Ovary (tissue), 10 donors: ENCODE measurements at regions of chr1 and their contacts with region 1.

Region 1: GRCh38 chr1:153510984-153511410 is 24.8 kb downstream of the S100A6 start:
- DNase-seq: peak; percentile 84 to 90 (median 86)
- H3K4me3 ChIP-seq: no peak overlapping the region
- H3K27ac ChIP-seq: no peak overlapping the region
- H3K4me1 ChIP-seq: peaks cover 19% of the 10 kb centered on the region
- H3K27me3 ChIP-seq: no peaks in the 10 kb centered on the region
- CTCF ChIP-seq: peak; percentile 84 to 91 (median 86)
- EP300 ChIP-seq: no peak
- POLR2A ChIP-seq: peak; percentile 3

Region 2: DNA sequence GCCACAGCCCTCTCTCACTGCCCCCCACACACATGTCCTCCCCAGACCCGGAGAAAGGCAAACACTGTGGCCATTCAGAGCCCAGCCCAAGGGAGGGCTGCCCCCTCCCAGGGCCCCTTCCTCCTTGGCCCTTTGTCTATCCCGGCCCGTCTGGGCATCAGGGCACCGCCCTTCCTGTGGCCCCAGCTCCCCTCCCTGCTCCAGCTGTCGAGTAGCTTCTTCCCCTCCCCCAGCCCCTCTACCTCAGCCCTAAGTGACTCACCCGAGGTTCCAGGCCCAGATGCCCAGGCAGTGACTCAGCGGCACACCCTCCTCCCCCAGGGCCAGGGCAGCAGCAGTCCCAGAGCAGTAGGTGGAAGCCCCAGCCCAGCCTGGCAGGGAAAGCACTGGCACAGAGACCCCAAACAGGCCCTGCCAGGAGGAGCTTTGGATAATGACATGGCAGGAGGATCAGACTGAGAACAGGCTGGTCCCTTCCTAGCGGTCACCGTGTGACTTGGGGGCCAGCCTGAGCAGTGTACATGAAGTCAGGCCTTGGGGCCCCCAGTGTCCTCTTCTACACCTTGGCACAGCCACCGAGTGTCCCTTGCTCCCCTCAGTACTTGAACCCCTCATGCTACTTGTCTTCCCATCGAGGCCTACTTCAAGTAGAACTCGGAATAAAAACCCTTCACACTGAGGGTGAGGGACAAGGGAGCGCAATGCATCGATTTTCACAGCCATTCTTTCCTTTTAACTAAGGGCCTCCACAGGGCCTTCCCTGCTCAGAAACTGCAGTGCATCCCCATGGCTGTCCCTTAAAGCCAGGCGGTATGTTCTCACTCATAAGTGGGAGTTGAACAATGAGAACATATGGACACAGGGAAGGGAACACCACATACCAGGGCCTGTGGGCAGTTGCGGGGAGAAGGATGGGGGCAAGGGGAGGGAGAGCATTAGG is 55.7 kb after region 1 on chr1:
- intact Hi-C with region 1: loop called (anchors 1 to 5 kb)
- DNase-seq: peak; percentile 89 to 96 (median 91)
- H3K4me3 ChIP-seq: no peak overlapping the region
- H3K27ac ChIP-seq: peak overlapping the region; percentile 83 to 90
- H3K4me1 ChIP-seq: peaks cover 16% of the 10 kb centered on the region
- H3K27me3 ChIP-seq: no peaks in the 10 kb centered on the region
- CTCF ChIP-seq: no peak
- EP300 ChIP-seq: no peak
- POLR2A ChIP-seq: no peak

Region 3: DNA sequence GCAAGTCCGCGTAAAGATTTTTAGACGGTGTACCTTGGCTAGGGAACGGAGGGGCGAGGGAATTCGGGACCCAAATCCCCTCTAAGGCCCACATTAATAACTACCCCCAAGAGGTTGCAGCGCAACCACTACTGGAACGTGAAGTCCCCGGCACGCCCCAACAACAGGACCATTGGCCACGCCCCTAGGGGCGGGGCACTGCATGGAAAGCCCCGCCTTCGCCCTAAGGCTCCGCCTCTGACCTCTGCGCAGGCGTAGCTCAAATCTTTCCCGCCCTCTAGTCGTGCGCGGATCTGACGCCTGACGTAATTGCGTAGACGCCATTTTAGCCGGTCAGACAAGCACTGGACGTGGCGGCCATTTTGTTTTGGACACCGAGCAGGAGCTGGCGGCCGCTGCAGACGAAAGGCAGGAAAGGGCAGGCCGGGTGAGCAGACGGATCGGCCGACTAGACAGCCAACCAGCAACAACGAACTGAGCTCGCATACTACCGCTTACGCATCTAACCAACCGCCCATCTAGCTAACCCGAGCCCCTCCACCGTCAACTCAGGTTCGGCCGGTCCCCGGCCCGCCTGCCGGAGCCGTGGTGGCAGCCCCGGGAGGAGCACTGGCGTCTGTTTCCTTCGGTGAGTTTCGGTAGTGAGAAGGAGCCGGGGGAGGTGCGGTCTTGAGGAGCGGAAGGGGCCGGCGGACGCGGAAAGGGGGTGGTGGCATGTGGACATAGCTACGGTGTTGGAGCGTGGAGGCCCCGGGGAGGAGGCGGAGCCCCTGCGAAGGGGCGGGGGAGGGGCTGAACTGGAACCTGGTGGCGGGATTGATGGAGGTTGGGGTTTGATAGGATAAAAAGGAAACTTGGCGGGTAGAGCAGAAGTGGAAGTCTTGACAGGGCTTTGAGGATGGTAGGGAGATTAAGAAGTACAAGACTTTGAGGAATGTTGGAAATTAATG is 123.0 kb after region 1 on chr1 and contains the start of gene CHTOP:
- intact Hi-C with region 1: loop called in 1 of 4 experiments (anchors 10 kb)
- DNase-seq: peak; percentile 98 to 99 (median 99)
- H3K4me3 ChIP-seq: peak within 1 kb of the TSS; percentile 95
- H3K27ac ChIP-seq: peak within 1 kb of the TSS; percentile 97 to 98
- H3K4me1 ChIP-seq: peaks cover 11% of the 10 kb centered on the region
- H3K27me3 ChIP-seq: no peaks in the 10 kb centered on the region
- CTCF ChIP-seq: peak in 1 of 3 donors; percentile 44
- EP300 ChIP-seq: no peak
- POLR2A ChIP-seq: peak; percentile 89
- total RNA-seq, gene CHTOP: 54.0 to 91.1 (median 79.0) TPM

Region 4: GRCh38 chr1:153763365-153764225 is 252.6 kb after region 1 on chr1:
- intact Hi-C with region 1: loop called in 1 of 4 experiments (anchors 10 kb)
- DNase-seq: no peak
- H3K4me3 ChIP-seq: no peak overlapping the region
- H3K27ac ChIP-seq: no peak overlapping the region
- H3K4me1 ChIP-seq: no peaks in the 10 kb centered on the region
- H3K27me3 ChIP-seq: no peaks in the 10 kb centered on the region
- CTCF ChIP-seq: no peak
- EP300 ChIP-seq: no peak
- POLR2A ChIP-seq: peak; percentile 3

Region 5: DNA sequence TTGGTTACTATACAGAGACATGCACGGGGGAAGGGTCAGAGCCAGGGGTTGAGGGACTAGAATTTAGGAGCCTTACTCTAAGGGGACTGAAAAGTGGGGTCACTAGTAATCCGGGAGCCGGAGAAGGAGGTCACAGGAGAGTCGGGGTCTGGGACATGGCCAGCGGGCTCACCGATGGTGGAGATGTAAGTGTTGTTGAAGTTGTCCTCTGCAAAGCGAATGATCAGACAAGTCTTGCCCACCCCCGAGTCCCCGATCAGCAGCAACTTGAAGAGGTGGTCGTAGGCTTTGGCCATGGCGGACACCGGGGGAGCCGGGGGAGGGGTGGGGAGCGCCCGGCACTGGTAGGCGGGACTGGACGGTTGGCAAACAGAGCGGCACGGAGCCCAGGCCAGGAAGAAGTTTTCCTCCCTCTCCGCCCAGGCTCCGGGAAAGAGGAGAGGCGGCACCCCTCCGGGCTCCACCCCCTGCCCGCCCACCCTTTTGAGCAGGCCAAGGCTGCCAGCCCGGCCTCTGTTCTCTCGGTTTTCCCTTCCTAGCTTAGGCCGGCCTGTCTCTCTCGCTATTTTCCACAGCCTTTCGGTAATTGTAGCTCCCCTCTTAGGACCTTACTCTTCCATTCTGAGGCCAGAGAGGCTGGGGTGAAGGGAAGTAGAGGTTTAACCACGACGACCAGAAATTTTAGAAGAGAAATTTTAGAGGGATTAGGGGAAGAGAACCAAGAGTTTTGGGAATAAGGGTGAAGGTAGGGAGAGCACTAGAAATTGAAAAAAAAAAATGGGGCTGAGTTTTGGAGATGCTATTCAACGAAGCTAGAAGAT is 475.2 kb after region 1 on chr1 and contains the start of gene RAB13:
- intact Hi-C with region 1: loop called in 1 of 4 experiments (anchors 10 kb)
- DNase-seq: peak; percentile 87 to 89 (median 88)
- H3K4me3 ChIP-seq: peak within 1 kb of the TSS; percentile 39
- H3K27ac ChIP-seq: peak within 1 kb of the TSS; percentile 71 to 84
- H3K4me1 ChIP-seq: peaks cover 8% of the 10 kb centered on the region
- H3K27me3 ChIP-seq: no peaks in the 10 kb centered on the region
- CTCF ChIP-seq: no peak
- EP300 ChIP-seq: peak; percentile 57
- POLR2A ChIP-seq: no peak
- total RNA-seq, gene RAB13: 31.4 to 147 (median 101) TPM